CD4-positive, alpha-beta memory T cell (primary cell): ENCODE measurements at regions of chr4 and their contacts with region 1.

Region 1: DNA sequence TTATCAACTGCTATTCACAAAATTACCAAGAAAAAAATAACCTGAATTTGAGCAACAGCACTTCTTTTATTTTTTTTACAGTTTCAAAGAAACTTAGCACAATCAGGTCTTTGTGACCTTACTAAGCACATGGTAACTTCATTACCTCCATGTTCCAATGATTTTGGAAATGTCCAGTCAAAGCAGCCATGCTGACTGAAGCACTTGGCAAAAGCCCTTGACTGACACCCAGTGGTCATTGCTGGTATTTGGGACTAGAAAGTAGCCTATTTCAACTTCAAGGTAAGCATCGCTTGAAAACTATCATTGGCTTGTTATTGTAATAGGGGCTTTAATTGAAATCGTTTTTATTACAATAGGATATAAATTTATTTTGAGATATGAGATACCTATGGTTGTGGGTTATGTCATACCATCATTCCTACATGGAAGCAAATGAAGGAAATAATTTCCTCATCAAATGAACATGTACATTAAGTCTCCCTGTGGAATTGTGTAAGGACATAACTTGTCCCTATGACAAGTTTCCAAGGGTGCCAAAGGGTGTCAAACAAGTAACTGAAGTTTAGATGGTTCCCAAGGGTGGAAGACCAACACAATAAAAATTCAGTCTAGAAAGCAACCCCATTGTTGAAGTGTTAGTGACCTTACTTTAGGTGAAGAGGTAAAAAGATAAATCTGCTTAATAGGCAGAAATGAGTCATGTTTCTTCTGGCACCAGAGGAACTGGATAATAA is 15.2 kb upstream of the ANXA10 start:
- DNase-seq: peak in 1 of 5 donors; percentile 5
- H3K4me3 ChIP-seq: no peak overlapping the region
- H3K4me3 Mint-ChIP-seq: no peak overlapping the region
- H3K27ac ChIP-seq: no peak overlapping the region
- H3K27ac Mint-ChIP-seq: no peak overlapping the region
- H3K4me1 ChIP-seq: no peaks in the 10 kb centered on the region
- H3K4me1 Mint-ChIP-seq: no peaks in the 10 kb centered on the region
- H3K27me3 ChIP-seq: no peaks in the 10 kb centered on the region
- H3K27me3 Mint-ChIP-seq: peaks cover 0 to 3% of the 10 kb centered on the region in 2 donors

Region 2: DNA sequence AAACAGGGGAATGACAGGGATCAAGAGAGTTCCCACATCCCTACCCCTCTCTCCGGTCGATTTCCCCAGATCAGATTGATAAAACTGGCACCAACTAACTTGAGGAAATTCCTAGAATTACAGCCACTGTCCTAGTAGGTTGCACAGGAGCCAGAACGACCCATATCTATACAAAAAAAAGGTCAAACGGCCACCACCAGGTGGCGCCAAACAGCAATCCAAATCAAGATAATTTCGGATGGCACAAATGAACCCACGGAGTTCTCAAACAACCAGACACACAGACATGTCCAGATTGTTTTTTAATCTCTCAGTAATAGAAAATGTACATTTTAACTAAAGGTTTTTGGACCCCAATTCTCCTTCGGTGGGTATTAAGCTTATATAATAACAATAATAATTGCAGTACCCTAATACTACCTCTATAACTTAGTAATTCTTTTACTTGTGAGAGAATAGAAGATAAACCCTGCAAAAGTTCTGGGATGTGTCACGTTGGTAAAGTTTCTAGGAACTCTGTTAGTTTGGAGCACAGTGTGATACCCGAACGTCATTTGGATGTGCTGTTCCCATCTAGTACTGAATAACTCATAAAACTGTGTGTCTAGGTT is 1055.5 kb before region 1 on chr4:
- CTCF ChIA-PET with region 1: no interaction called
- POLR2A ChIA-PET with region 1: no interaction called
- intact Hi-C with region 1: loop called (anchors 2 kb)
- DNase-seq: peak; percentile 1 to 35 (median 22)
- H3K4me3 ChIP-seq: no peak overlapping the region
- H3K4me3 Mint-ChIP-seq: no peak overlapping the region
- H3K27ac ChIP-seq: no peak overlapping the region
- H3K27ac Mint-ChIP-seq: no peak overlapping the region
- H3K4me1 ChIP-seq: no peaks in the 10 kb centered on the region
- H3K4me1 Mint-ChIP-seq: no peaks in the 10 kb centered on the region
- H3K27me3 ChIP-seq: no peaks in the 10 kb centered on the region
- H3K27me3 Mint-ChIP-seq: no peaks in the 10 kb centered on the region

Region 3: GRCh38 chr4:168221301-168221700 is 144.1 kb after region 1 on chr4:
- CTCF ChIA-PET with region 1: no interaction called
- POLR2A ChIA-PET with region 1: no interaction called
- intact Hi-C with region 1: no loop called
- DNase-seq: no peak
- H3K4me3 ChIP-seq: no peak overlapping the region
- H3K4me3 Mint-ChIP-seq: no peak overlapping the region
- H3K27ac ChIP-seq: no peak overlapping the region
- H3K27ac Mint-ChIP-seq: peak overlapping the region in 1 of 7 donors; percentile 69
- H3K4me1 ChIP-seq: no peaks in the 10 kb centered on the region
- H3K4me1 Mint-ChIP-seq: peaks cover 0 to 10% (median 4%) of the 10 kb centered on the region in 4 donors
- H3K27me3 ChIP-seq: no peaks in the 10 kb centered on the region
- H3K27me3 Mint-ChIP-seq: no peaks in the 10 kb centered on the region

Region 4: DNA sequence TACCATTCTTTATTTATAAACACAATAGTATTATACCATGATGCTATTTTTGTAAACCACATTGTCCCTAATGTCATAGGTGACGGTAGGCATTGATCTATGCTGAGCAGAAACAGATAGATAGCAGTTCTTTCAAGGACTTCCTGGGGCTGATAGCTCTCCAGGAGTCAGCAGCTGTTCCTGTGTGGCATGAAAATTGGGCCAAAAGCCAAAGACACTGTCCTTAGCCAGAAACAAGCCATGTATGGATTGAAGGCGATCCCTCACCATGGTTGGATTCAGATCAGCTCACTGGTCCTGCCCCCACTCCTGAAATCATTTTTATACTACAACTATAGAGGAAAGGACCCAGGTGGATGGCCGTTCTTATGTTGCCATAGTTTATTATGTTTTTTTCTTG is 187.7 kb after region 1 on chr4:
- CTCF ChIA-PET with region 1: no interaction called
- POLR2A ChIA-PET with region 1: no interaction called
- intact Hi-C with region 1: no loop called
- DNase-seq: no peak
- H3K4me3 ChIP-seq: no peak overlapping the region
- H3K4me3 Mint-ChIP-seq: no peak overlapping the region
- H3K27ac ChIP-seq: no peak overlapping the region
- H3K27ac Mint-ChIP-seq: peak overlapping the region in 1 of 7 donors; percentile 15
- H3K4me1 ChIP-seq: no peaks in the 10 kb centered on the region
- H3K4me1 Mint-ChIP-seq: peaks cover 0 to 2% (median 0%) of the 10 kb centered on the region in 4 donors
- H3K27me3 ChIP-seq: no peaks in the 10 kb centered on the region
- H3K27me3 Mint-ChIP-seq: no peaks in the 10 kb centered on the region